ENCODE measurements at regions of chr19 and their contacts with region 1.

Region 1: GRCh38 chr19:19170053-19170872 is at the start of gene MEF2B:
- DNase-seq: peak; percentile 88
- ATAC-seq: peak; percentile 95
- H3K4me3 ChIP-seq: peak within 1 kb of the TSS; percentile 7 to 46 (median 26)
- H3K4me3 Mint-ChIP-seq: peak within 1 kb of the TSS; percentile 82
- H3K27ac ChIP-seq: no peak within 1 kb of the TSS
- H3K27ac Mint-ChIP-seq: peak within 1 kb of the TSS; percentile 56
- H3K4me1 ChIP-seq: peaks cover 13 to 29% of the 10 kb centered on the region in 2 donors
- H3K4me1 Mint-ChIP-seq: peaks cover 34% of the 10 kb centered on the region
- H3K27me3 ChIP-seq: peaks cover 0 to 18% (median 2%) of the 10 kb centered on the region in 4 experiments
- H3K27me3 Mint-ChIP-seq: peaks cover 8% of the 10 kb centered on the region
- CTCF ChIP-seq: no peak
- total RNA-seq, gene MEF2B: 4.1 and 5.5 TPM in 2 replicates

Region 2: GRCh38 chr19:18214779-18215433 is 955.4 kb before region 1 on chr19:
- CTCF ChIA-PET with region 1: no interaction called
- POLR2A ChIA-PET with region 1: no interaction called
- intact Hi-C with region 1: no loop called
- DNase-seq: no peak
- ATAC-seq: no peak
- H3K4me3 ChIP-seq: no peak overlapping the region
- H3K4me3 Mint-ChIP-seq: no peak overlapping the region
- H3K27ac ChIP-seq: no peak overlapping the region
- H3K27ac Mint-ChIP-seq: no peak overlapping the region
- H3K4me1 ChIP-seq: no peaks in the 10 kb centered on the region
- H3K4me1 Mint-ChIP-seq: no peaks in the 10 kb centered on the region
- H3K27me3 ChIP-seq: peaks cover 0 to 34% (median 8%) of the 10 kb centered on the region in 4 experiments
- H3K27me3 Mint-ChIP-seq: peaks cover 14% of the 10 kb centered on the region
- CTCF ChIP-seq: no peak

Region 3: DNA sequence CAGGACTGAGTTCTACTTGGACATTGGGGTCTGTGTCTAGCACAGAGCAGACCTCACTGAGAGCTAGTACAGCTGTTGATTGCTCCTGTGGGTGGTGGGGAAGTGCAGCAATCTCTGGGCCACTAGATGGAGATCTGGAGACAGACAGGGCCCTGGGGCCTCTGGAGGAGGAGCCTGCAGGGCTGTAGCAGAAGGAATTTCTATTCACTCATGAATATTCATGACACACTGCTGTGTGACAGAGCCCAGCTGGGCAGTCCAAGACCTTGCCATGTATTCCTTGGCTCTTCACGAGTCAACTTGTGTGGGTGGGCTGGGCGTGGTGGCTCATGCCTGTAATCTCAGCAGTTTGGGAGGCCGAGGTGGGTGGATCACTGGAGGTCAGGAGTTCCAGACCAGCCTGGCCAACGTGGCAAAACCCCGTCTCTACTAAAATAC is 174.4 kb before region 1 on chr19:
- CTCF ChIA-PET with region 1: no interaction called
- POLR2A ChIA-PET with region 1: no interaction called
- intact Hi-C with region 1: no loop called
- DNase-seq: peak; percentile 29
- ATAC-seq: peak; percentile 43
- H3K4me3 ChIP-seq: no peak overlapping the region
- H3K4me3 Mint-ChIP-seq: no peak overlapping the region
- H3K27ac ChIP-seq: no peak overlapping the region
- H3K27ac Mint-ChIP-seq: no peak overlapping the region
- H3K4me1 ChIP-seq: no peaks in the 10 kb centered on the region
- H3K4me1 Mint-ChIP-seq: no peaks in the 10 kb centered on the region
- H3K27me3 ChIP-seq: no peaks in the 10 kb centered on the region
- H3K27me3 Mint-ChIP-seq: no peaks in the 10 kb centered on the region
- CTCF ChIP-seq: no peak

Region 4: DNA sequence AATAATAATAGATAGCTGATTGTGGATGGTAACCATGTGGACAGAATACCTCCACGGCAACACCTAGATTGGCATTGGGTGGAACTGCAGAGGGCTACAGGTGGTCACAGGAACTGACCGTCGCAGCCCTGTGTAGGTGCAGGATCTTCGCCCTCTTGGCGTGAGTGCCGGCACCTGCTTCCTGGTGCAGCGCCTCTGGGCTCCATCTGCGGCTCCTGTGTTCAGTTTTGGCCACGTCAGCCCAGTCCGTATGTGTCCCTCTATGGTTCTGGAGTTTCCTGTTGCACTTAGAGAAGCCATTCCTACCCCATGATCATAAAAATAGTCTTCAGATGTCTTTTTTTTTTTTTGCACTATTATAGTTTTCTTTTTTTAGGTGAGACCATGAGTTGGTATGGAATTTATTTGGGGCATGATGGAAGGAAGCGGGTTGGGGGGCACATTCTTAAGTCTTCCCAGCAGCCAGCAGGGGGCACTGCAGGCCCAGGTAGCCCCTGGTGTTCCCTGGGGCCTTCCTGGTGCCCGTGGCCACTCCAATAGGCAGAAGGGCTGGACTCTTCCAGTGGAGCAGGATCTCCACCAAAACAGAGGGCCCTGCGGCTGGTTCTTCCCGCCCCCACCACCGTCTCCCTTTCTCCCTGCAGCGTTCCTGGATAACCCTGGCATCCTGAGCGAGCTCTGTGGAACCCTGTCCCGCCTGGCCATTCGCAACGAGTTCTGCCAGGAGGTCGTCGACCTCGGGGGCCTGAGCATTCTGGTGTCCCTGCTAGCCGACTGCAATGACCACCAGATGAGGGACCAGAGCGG is 116.6 kb before region 1 on chr19:
- CTCF ChIA-PET with region 1: interaction called, 31 read pairs
- POLR2A ChIA-PET with region 1: no interaction called
- intact Hi-C with region 1: loop called (anchors 2 kb)
- DNase-seq: peak; percentile 75
- ATAC-seq: peak; percentile 66
- H3K4me3 ChIP-seq: no peak overlapping the region
- H3K4me3 Mint-ChIP-seq: no peak overlapping the region
- H3K27ac ChIP-seq: no peak overlapping the region
- H3K27ac Mint-ChIP-seq: no peak overlapping the region
- H3K4me1 ChIP-seq: no peaks in the 10 kb centered on the region
- H3K4me1 Mint-ChIP-seq: no peaks in the 10 kb centered on the region
- H3K27me3 ChIP-seq: no peaks in the 10 kb centered on the region
- H3K27me3 Mint-ChIP-seq: no peaks in the 10 kb centered on the region
- CTCF ChIP-seq: peak; percentile 82

Region 5: GRCh38 chr19:19068659-19069654 is 101.3 kb before region 1 on chr19:
- CTCF ChIA-PET with region 1: interaction called, 16 read pairs
- POLR2A ChIA-PET with region 1: no interaction called
- intact Hi-C with region 1: no loop called
- DNase-seq: peak; percentile 42
- ATAC-seq: peak; percentile 23
- H3K4me3 ChIP-seq: peak overlapping the region in 4 of 5 experiments; percentile 12 to 55 (median 35)
- H3K4me3 Mint-ChIP-seq: peak overlapping the region; percentile 83
- H3K27ac ChIP-seq: peak overlapping the region; percentile 66
- H3K27ac Mint-ChIP-seq: peak overlapping the region; percentile 96
- H3K4me1 ChIP-seq: peaks cover 43 to 66% of the 10 kb centered on the region in 2 donors
- H3K4me1 Mint-ChIP-seq: peaks cover 66% of the 10 kb centered on the region
- H3K27me3 ChIP-seq: no peaks in the 10 kb centered on the region
- H3K27me3 Mint-ChIP-seq: no peaks in the 10 kb centered on the region
- CTCF ChIP-seq: no peak

Region 6: DNA sequence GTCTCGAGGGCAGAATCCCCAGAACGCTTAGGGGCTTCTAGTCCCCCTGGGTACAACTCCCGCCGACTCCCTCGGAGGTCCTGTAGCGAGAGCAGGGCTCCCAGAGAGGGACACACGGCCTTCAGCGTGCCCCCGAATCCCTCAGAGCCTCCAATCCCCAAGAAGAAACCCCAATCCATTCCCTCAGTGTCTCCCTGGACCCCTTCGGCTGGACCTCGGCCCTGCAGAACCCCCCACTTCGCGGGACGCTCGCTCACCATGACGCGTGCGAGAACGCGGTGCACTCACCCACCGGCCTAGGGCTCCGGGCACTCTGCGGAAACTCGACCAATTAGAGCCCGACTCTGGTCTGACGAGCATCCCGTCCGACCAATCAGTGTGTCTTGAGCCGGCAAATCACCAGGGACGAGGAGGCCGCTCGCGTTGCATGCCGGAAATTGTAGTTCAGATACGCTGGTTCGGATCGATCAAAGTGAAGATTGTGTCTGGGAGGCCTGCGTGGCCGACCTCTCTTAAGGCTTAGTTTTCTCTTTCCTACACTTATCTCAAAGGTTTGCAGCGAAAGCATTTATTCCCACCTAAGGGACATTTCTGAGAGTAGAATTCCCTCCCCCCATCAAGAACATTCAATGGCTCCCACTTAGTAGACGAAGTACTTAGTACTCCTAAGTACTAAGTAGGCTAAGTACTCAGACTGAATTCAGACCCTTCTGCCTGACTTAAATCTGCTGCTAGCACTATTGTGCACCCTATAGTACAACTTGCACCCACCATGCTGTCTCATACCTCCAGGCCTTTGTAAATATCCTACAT is 31.9 kb before region 1 on chr19 and contains the start of gene TMEM161A:
- CTCF ChIA-PET with region 1: interaction called, 285 read pairs
- POLR2A ChIA-PET with region 1: interaction called, 4 read pairs
- intact Hi-C with region 1: loop called (anchors 1 kb)
- DNase-seq: peak; percentile 96
- ATAC-seq: peak; percentile 100
- H3K4me3 ChIP-seq: peak within 1 kb of the TSS; percentile 78 to 90 (median 86)
- H3K4me3 Mint-ChIP-seq: peak within 1 kb of the TSS; percentile 97
- H3K27ac ChIP-seq: peak within 1 kb of the TSS; percentile 29 to 70
- H3K27ac Mint-ChIP-seq: peak within 1 kb of the TSS; percentile 93
- H3K4me1 ChIP-seq: peaks cover 15 to 26% of the 10 kb centered on the region in 2 donors
- H3K4me1 Mint-ChIP-seq: peaks cover 41% of the 10 kb centered on the region
- H3K27me3 ChIP-seq: no peaks in the 10 kb centered on the region
- H3K27me3 Mint-ChIP-seq: no peaks in the 10 kb centered on the region
- CTCF ChIP-seq: no peak
- total RNA-seq, gene TMEM161A: 23.2 and 23.6 TPM in 2 replicates

Region 7: DNA sequence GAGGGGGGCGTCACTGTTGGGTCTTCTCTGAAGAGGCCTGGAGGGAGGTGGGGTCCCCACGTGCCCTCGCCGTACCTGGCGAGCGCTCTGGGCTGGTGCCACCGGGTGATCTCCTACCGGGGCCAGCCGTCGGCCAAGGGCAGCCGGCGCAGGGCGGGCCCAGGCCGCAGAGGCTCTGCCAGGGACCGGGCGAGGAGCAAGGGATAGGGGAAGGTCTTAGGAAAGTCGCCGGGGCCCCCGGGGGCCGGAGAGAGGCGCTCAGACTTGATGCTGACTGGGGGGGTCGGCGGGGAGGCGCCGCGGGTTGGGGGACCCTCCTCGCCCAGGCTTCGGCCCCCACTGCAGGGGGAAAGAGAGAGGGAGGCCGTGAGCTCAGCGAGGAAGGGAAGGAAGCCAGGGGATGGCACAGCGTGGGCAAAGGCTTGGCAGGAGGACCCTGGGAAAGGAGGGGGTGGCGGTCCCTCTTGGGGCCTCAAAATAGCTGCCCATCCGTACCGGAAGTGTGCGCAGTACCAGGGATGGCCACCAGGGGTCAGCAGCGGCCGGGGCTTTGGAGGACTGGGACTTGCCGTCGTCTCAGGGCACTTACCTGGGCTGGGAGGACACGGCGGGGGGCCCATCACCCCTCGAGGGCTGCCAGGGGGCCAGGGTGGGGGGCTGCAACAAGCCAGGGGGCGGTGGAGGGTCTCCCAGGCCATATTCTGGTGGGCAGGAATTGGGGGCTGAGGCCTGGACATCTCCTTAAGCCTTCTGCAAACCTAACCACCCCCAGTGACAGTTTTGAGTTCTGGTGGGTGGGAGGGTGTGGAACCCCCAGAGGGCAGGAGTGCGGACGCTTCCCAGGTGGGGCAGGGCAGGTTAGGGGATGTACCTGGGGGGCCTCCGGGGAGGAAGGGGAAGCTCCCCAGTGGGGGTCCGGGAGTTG is 24.3 kb before region 1 on chr19:
- CTCF ChIA-PET with region 1: interaction called, 285 read pairs
- POLR2A ChIA-PET with region 1: interaction called, 11 read pairs
- intact Hi-C with region 1: loop called (anchors 1 kb)
- DNase-seq: peak; percentile 86
- ATAC-seq: peak; percentile 96
- H3K4me3 ChIP-seq: no peak overlapping the region
- H3K4me3 Mint-ChIP-seq: no peak overlapping the region
- H3K27ac ChIP-seq: no peak overlapping the region
- H3K27ac Mint-ChIP-seq: no peak overlapping the region
- H3K4me1 ChIP-seq: peaks cover 6 to 12% of the 10 kb centered on the region in 2 donors
- H3K4me1 Mint-ChIP-seq: peaks cover 9% of the 10 kb centered on the region
- H3K27me3 ChIP-seq: no peaks in the 10 kb centered on the region
- H3K27me3 Mint-ChIP-seq: no peaks in the 10 kb centered on the region
- CTCF ChIP-seq: peak; percentile 83

Region 8: GRCh38 chr19:19155495-19156219 is 14.6 kb before region 1 on chr19:
- CTCF ChIA-PET with region 1: interaction called, 63 read pairs
- POLR2A ChIA-PET with region 1: interaction called, 8 read pairs
- intact Hi-C with region 1: loop called (anchors 1 kb)
- DNase-seq: peak; percentile 45
- ATAC-seq: peak; percentile 23
- H3K4me3 ChIP-seq: peak overlapping the region in 1 of 5 experiments; percentile 10
- H3K4me3 Mint-ChIP-seq: peak overlapping the region; percentile 51
- H3K27ac ChIP-seq: no peak overlapping the region
- H3K27ac Mint-ChIP-seq: peak overlapping the region; percentile 35
- H3K4me1 ChIP-seq: peaks cover 36 to 63% of the 10 kb centered on the region in 2 donors
- H3K4me1 Mint-ChIP-seq: peaks cover 61% of the 10 kb centered on the region
- H3K27me3 ChIP-seq: no peaks in the 10 kb centered on the region
- H3K27me3 Mint-ChIP-seq: no peaks in the 10 kb centered on the region
- CTCF ChIP-seq: no peak

Region 9: DNA sequence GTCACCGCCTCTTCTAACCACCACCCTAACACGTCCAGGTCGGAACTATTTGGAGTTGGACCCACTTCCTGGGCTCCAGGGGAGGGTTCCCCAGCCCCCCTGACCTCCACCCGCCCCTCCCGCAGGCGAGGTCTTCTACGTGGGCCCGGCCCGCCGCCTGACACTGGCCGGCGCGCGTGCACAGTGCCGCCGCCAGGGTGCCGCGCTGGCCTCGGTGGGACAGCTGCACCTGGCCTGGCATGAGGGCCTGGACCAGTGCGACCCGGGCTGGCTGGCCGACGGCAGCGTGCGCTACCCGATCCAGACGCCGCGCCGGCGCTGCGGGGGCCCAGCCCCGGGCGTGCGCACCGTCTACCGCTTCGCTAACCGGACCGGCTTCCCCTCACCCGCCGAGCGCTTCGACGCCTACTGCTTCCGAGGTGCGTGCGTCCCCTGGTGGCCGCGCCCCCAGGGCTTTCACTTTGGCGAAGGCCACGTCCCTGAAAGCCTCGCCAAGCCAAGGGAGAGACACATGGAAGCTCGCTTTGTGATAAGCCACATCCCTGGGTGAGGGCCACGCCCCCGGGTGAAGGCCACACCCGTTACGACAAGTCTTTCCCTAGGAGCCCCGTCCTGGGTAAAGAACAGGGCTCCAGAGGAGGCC is 54.7 kb after region 1 on chr19:
- CTCF ChIA-PET with region 1: interaction called, 5 read pairs
- POLR2A ChIA-PET with region 1: no interaction called
- intact Hi-C with region 1: loop called (anchors 2 kb)
- DNase-seq: peak; percentile 84
- ATAC-seq: peak; percentile 95
- H3K4me3 ChIP-seq: peak overlapping the region; percentile 12 to 53 (median 44)
- H3K4me3 Mint-ChIP-seq: peak overlapping the region; percentile 84
- H3K27ac ChIP-seq: no peak overlapping the region
- H3K27ac Mint-ChIP-seq: no peak overlapping the region
- H3K4me1 ChIP-seq: peaks cover 10% of the 10 kb centered on the region in 2 donors
- H3K4me1 Mint-ChIP-seq: peaks cover 6% of the 10 kb centered on the region
- H3K27me3 ChIP-seq: peaks cover 0 to 35% (median 9%) of the 10 kb centered on the region in 4 experiments
- H3K27me3 Mint-ChIP-seq: peaks cover 22% of the 10 kb centered on the region
- CTCF ChIP-seq: peak; percentile 89